Heart left ventricle (tissue), 16 donors: ENCODE measurements at regions of chr5 and their contacts with region 1.

Region 1: DNA sequence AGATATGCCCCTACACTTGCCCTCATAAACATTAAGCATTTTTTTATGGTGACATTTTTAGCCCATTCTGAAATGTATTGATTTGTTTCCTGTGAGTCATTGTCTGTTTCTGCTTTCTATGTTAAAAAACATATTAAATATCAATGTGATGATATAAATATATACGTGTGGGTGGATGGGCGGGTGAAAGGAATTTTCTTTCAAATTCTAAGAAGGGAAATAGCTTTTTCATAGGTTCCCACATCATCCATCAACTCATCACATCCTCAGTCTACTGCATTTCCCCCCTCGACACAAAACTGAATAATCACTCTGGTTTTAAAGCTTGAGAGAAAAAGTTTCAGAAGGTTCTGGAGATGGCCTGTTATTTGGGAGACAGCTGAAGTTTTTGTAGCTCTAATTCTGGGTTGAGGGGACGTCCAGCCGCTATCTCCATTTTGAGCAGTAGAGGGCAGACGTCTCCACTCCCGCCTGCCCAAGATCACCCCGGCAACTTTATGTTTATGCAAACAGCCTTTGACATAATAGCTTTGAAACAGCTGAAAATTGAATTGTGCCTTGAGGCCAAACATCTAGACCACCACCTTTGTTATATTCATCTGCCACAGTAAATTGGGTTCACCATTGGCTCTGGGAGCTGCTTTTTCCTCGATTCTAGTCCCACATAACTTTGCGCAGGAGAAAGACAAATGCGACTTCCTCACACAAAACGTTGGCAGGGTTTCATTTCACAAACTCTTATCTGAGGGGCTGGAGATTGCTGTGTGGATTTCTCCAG is 216.2 kb upstream of the CLINT1 start:
- DNase-seq: peak; percentile 30 to 61 (median 57)
- ATAC-seq: peak in 3 of 4 donors; percentile 82 to 86 (median 83)
- H3K4me3 ChIP-seq: peak overlapping the region in 11 of 12 donors; percentile 2 to 44 (median 27)
- H3K27ac ChIP-seq: peak overlapping the region in 7 of 12 donors; percentile 28 to 60 (median 48)
- H3K4me1 ChIP-seq: peaks cover 0 to 10% (median 5%) of the 10 kb centered on the region in 12 donors
- H3K27me3 ChIP-seq: no peaks in the 10 kb centered on the region
- CTCF ChIP-seq: peak; percentile 73 to 92 (median 84)
- POLR2A ChIP-seq: no peak

Region 2: DNA sequence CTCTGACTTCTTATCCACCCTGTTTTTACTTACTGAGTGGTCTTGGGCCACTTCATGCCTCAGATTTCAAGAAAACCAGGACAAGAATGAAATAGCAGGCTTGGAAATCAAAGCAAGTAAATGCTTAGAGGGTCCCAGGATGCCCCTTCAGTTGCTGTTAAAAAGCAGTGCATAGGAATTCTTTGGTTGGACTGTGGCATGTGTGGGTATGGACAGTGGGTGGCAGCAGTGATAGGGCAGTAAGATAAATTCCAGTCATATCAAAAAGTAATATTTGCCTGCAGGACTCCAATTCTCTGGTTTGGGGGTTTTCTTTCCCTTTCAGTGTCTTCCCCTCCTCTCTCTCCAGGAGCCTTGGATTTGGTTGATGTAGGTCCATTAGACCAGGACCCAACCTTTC is 90.5 kb after region 1 on chr5:
- intact Hi-C with region 1: loop called in 4 of 10 experiments (anchors 5 to 10 kb)
- DNase-seq: no peak
- ATAC-seq: no peak
- H3K4me3 ChIP-seq: no peak overlapping the region
- H3K27ac ChIP-seq: no peak overlapping the region
- H3K4me1 ChIP-seq: no peaks in the 10 kb centered on the region
- H3K27me3 ChIP-seq: peaks cover 0 to 9% (median 0%) of the 10 kb centered on the region in 9 donors
- CTCF ChIP-seq: no peak
- POLR2A ChIP-seq: no peak

Region 3: GRCh38 chr5:159112436-159112835 is 1037.3 kb after region 1 on chr5:
- intact Hi-C with region 1: loop called in 9 of 10 experiments (anchors 5 to 10 kb)
- DNase-seq: no peak
- ATAC-seq: no peak
- H3K4me3 ChIP-seq: no peak overlapping the region
- H3K27ac ChIP-seq: no peak overlapping the region
- H3K4me1 ChIP-seq: peaks cover 0 to 3% (median 0%) of the 10 kb centered on the region in 12 donors
- H3K27me3 ChIP-seq: peaks cover 0 to 15% (median 0%) of the 10 kb centered on the region in 9 donors
- CTCF ChIP-seq: no peak
- POLR2A ChIP-seq: no peak

Region 4: GRCh38 chr5:159133041-159133741 is 1058.0 kb after region 1 on chr5:
- intact Hi-C with region 1: loop called in 4 of 10 experiments (anchors 5 to 10 kb)
- DNase-seq: no peak
- ATAC-seq: peak in 3 of 4 donors; percentile 44 to 78 (median 58)
- H3K4me3 ChIP-seq: peak overlapping the region in 8 of 12 donors; percentile 6 to 41 (median 28)
- H3K27ac ChIP-seq: peak overlapping the region in 1 of 12 donors; percentile 25
- H3K4me1 ChIP-seq: peaks cover 0 to 8% (median 0%) of the 10 kb centered on the region in 12 donors
- H3K27me3 ChIP-seq: peaks cover 0 to 7% (median 0%) of the 10 kb centered on the region in 9 donors
- CTCF ChIP-seq: peak; percentile 74 to 88 (median 82)
- POLR2A ChIP-seq: no peak